ENCODE measurements at regions of chr16 and their contacts with region 1.

Region 1: GRCh38 chr16:69339289-69340108 is at the starts of genes COG8 and NIP7:
- DNase-seq: peak; percentile 91 to 97
- ATAC-seq: peak; percentile 98 to 100 (median 99)
- H3K4me3 ChIP-seq: peak within 1 kb of the TSS; percentile 69 to 97 (median 80)
- H3K27ac ChIP-seq: peak within 1 kb of the TSS; percentile 42 to 94 (median 88)
- H3K4me1 ChIP-seq: peaks cover 0 to 38% (median 28%) of the 10 kb centered on the region in 9 donors
- H3K27me3 ChIP-seq: no peaks in the 10 kb centered on the region
- CTCF ChIP-seq: peak; percentile 75 to 94 (median 85)
- total RNA-seq, gene COG8: 20.0 to 29.1 (median 23.7) TPM
- total RNA-seq, gene NIP7: 6.1 to 15.8 (median 7.8) TPM

Region 2: DNA sequence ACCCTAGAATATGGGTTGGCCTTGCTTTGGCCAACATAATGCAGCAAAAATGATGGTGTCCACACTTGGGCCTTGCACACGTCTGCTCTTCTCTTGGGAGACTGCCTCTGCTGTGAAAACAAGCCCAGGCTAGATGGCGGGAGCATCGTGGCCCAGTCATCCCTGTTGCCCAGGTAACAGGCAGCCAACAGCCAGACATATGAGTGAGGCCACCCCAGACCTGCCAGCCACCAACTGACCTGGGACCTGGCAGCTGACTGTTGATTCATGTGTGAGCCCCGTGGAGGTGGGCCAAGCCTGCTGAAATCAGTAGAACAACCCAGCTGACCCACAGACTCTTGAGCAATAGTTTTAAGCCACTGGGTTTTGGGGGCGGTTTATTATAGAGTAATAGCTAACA is 733.8 kb before region 1 on chr16:
- intact Hi-C with region 1: no loop called
- DNase-seq: no peak
- ATAC-seq: no peak
- H3K4me3 ChIP-seq: no peak overlapping the region
- H3K27ac ChIP-seq: no peak overlapping the region
- H3K4me1 ChIP-seq: no peaks in the 10 kb centered on the region
- H3K27me3 ChIP-seq: no peaks in the 10 kb centered on the region
- CTCF ChIP-seq: no peak

Region 3: GRCh38 chr16:69310653-69311532 is 28.6 kb before region 1 on chr16 and contains the start of gene VPS4A:
- intact Hi-C with region 1: loop called in 2 of 10 experiments (anchors 1 to 2 kb)
- DNase-seq: peak; percentile 96 to 97
- ATAC-seq: peak; percentile 94 to 98 (median 96)
- H3K4me3 ChIP-seq: peak within 1 kb of the TSS; percentile 77 to 99 (median 88)
- H3K27ac ChIP-seq: peak within 1 kb of the TSS; percentile 36 to 97 (median 90)
- H3K4me1 ChIP-seq: peaks cover 5 to 44% (median 25%) of the 10 kb centered on the region in 9 donors
- H3K27me3 ChIP-seq: no peaks in the 10 kb centered on the region
- CTCF ChIP-seq: peak; percentile 76 to 95 (median 91)
- total RNA-seq, gene VPS4A: 24.2 to 35.1 (median 27.7) TPM

Measured in heart right ventricle (tissue), 16 donors.